Right cardiac atrium (tissue), 5 donors: ENCODE measurements at regions of chr7 and their contacts with region 1.

Region 1: DNA sequence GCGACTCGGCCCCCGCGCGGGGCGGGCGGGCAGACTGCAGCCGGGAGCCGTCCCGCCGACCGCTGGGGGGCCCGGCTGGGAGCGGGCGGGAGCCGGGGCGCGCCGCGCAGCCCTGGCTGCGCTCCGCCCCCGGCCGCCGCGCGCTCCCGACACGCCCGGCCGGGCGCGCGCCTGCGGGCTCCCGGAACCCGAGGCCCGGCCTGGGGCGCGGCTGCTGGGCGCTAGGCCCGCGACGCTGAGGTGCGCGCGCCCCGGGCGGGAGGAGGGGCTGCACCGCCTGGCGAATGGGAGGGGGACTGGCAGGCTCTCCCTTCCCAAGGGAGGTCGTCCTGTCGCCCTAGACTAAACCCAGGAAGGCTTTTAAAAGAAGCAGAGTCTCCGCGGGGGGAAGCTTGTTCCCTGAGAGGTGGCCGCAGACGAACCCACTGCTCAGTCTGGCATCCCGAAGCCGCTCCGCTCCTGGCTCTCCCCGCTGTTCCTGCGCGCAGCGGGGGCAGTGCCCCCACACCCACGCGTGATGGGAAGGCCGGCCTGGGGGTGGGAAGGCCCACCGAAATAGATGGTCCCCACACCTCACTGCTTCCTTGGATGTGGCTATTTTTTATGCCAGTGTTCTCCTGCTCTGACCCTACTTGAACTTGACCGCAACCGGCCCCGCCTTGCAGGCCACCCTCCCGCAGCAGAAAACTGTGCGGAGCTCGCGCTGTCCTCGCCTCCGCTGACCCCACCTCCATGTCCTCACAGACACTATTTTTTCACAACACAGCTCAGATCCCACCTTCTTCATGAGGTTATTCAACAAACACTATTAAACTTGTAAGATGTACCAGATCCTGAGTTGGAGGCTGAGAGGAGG is at the start of gene VOPP1:
- DNase-seq: peak; percentile 76 to 89 (median 89)
- ATAC-seq: peak; percentile 85 to 94
- H3K4me3 ChIP-seq: peak within 1 kb of the TSS; percentile 97
- H3K27ac ChIP-seq: peak within 1 kb of the TSS; percentile 57
- H3K4me1 ChIP-seq: peaks cover 18% of the 10 kb centered on the region
- H3K27me3 ChIP-seq: no peaks in the 10 kb centered on the region
- total RNA-seq, gene VOPP1: 19.0 to 21.8 (median 21.0) TPM

Region 2: GRCh38 chr7:55550010-55550663 is 22.5 kb before region 1 on chr7:
- intact Hi-C with region 1: loop called in 1 of 4 experiments (anchors 2 kb)
- DNase-seq: no peak
- ATAC-seq: peak; percentile 10 to 52
- H3K4me3 ChIP-seq: no peak overlapping the region
- H3K27ac ChIP-seq: no peak overlapping the region
- H3K4me1 ChIP-seq: peaks cover 17% of the 10 kb centered on the region
- H3K27me3 ChIP-seq: no peaks in the 10 kb centered on the region

Region 3: DNA sequence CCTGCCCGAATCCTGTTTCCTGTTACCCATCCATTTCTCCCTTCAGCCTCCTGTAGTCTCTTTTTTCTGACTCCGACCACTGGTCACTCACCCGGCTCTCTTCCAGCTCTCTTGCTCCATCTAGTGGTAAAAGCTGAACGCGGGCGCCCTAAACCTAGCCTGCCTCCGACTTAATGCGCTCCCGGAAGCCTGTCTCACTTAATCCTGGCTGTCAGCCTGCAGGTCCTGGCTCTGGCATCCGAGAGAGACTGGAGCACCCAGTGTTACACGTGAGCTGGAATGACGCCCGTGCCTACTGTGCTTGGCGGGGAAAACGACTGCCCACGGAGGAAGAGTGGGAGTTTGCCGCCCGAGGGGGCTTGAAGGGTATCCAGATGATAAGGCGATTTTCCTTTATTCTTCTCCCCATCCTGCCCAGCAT is 501.8 kb after region 1 on chr7:
- intact Hi-C with region 1: no loop called
- DNase-seq: peak; percentile 84 to 93 (median 92)
- ATAC-seq: peak; percentile 91 to 92
- H3K4me3 ChIP-seq: no peak overlapping the region
- H3K27ac ChIP-seq: no peak overlapping the region
- H3K4me1 ChIP-seq: peaks cover 3% of the 10 kb centered on the region
- H3K27me3 ChIP-seq: no peaks in the 10 kb centered on the region